Right ventricle myocardium inferior (tissue), 1 donor: ENCODE measurements at regions of chr10 and their contacts with region 1.

Region 1: DNA sequence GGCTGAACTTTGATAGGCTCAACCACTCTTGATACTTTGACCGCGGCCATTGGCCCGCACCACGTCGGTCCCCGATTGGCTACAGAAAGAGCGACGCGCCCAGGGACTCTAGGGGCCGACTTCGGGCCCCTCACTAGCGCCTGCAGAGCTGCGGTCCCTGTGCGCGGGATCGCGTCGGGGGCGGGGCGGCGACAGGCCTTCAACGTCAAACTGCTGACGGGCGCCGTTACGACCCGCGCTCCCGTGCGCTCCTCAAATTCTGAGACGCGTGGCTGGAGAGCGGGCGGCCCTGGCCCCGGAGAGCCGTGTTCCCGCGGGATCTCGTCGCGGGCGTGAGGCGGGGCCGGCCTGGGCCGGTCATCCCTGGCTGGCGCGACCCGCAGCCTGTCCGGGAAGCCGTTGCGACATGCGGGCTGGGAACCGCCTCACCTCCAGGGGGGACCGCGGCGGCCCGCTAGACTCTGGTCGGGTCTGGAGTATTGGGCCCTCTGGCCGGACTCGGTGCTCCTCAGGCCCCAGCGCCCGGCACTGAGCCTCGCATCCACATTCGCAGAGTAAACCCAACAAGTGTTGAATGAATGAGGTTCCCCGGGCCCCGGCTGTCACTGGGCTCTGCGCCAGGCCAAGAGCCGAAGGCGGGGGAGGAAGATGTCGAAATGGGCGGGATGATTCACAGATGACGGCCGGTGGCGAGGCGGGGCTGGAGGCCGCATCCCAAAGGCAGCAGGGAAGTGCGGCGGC is 644 bp upstream of the SLC25A28 start:
- DNase-seq: peak; percentile 97
- ATAC-seq: peak; percentile 93

Region 2: DNA sequence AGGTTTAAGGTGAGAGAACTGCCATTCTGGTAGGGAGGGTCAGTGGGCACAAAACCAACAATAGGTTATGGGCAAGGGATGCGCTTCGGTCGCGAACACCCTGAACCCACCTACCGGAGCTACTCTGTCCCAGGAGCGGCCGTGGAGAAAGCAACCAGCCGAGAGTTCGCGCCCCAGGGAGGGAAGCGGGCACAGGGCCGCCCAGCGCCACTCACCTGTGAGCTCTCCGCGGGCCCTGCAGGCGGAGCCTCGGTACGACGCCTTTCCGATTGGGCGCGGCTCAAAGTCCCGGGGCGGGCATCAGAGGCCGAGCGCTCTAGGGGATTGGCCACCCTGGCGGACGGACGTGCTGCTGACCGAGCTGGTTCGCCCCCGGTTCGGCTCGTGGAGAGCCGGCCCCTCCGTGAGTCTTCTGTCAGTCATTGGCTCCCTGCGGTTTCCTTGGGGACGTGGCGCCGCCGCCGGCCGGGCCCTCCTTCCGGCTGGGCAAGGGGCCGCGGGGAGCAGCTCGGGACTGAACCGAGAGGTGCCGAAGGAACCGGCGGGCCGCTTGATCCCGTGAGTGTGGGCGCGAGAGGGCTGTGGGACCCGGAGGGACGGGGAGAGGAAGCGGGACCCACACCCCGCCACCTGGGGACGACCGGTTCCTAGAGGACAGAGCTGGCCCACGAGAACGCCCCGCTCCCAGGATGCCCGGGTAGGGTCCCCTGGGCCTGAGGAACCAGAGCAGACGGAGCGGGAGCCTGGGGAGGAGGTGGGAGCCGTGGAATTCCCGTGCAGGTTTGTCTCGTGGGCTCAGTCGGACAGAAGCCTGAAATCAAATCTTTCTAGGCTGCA is 38.4 kb after region 1 on chr10 and contains the start of gene ENTPD7:
- intact Hi-C with region 1: loop called (anchors 2 kb)
- DNase-seq: peak; percentile 97
- ATAC-seq: peak; percentile 100
- total RNA-seq, gene ENTPD7: 1.4 TPM

Region 3: DNA sequence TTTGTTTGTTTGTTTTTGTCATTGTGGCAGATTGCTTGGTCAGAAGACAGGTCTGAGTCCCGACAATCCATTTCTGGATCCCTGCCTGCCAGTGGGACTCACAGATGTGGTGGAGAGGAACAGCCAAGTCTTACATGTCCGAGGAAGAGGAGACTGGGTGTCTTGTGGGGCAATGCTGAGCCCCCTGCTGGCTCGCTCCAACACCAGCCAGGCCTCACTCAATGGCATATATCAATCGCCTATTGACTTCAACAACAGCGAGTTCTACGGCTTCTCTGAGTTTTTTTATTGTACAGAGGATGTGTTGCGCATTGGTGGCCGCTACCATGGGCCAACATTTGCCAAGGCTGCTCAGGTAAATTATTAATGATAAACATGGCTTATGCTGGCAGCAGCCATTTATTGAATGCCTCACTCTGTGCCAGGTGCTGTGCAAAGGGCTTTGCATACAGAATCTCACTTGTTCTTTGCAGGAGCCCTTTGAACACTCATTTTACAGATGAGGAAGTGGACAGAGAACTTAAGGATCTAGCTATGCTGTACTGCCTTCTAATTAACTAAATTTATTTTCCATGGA is 77.7 kb after region 1 on chr10:
- intact Hi-C with region 1: no loop called
- DNase-seq: no peak
- ATAC-seq: no peak

Region 4: DNA sequence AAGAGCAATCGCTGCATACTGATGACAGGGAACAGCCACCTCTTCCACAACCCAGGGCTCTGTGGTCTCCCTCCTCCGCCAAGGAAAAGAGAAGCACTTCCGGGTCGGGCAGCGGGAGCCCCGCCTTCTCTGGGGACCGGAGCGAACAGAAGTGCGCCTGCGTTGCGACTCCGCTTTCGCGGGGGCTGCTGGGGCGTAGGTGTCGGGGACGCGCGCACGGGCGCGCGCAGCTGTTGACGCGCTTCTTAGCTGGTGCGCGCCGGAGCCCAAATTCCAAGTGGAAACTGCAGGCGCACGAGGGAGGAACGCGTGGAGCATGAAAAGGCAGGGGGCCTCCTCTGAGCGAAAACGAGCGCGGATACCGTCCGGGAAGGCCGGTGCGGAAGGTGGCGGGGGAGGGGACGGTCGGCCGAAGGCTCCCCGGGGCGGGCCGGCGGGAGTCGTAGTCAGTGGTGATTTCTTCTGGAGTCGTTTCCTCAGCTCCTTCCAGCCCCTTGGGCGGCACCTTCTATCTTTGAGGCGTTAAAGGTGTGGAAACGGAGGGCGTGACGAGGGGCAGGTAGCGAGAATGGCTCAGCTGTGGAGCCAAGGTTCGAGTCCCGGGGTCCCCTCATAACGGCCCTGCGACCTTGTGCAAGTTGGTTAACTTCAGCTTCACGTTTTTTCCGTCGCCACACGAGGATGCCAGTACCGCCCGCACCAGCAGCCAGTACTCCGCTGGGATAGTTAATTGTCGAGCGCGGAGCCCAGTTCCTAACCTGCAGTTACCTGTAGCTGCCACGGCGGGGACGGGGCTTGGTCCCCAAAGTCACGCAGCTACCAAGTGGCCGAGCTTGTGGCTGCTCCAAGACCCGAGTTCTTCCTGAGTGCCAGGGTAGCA is 111.4 kb after region 1 on chr10 and contains the starts of genes COX15 and CUTC:
- intact Hi-C with region 1: loop called (anchors 5 kb)
- DNase-seq: peak; percentile 98
- ATAC-seq: peak; percentile 99
- total RNA-seq, gene COX15: 30.1 TPM
- total RNA-seq, gene CUTC: 37.2 TPM

Region 5: DNA sequence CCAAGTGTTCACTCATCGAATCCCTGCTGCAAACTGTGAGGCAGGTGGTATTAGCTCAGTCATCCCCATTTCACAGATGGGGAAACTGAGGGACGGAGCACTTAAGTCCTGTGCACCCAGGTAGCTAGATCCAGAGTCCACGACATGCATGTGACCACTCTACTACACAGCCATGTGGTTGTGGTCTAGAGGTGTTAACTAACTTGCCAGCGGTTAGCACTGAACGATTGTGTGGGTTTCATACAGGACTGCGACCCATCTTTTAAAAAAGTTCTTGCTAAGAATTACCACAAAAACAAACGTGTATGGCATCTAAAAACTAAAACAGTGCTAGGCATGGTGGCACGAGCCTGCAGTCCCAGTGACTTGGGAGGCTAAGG is 145.4 kb after region 1 on chr10:
- intact Hi-C with region 1: no loop called
- DNase-seq: no peak
- ATAC-seq: no peak

Region 6: DNA sequence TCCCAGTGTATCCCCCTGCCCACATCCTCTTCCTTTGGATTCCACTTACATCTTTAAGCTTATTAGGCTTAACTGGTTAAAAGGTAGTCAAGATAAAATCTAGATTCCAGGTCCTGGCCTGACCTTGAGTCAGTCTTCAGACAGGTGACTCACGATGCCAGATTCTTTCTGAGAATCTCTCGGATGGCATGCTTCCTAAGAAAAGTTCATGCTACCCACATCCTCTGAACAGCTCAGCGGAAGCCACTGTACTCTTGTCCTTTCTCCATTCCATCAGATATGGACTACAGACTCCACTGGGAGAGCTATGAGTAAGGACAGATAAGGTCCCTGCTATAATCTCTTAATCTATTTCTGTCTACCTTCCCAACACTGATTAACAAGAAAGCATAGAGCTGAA is 345.4 kb after region 1 on chr10:
- intact Hi-C with region 1: no loop called
- DNase-seq: no peak
- ATAC-seq: no peak